Activated CD4-positive, alpha-beta memory T cell treated with anti-CD3 and anti-CD28 coated beads, Interleukin-2, amount 10 ng/mL, durations not matched to agents 7 days and 5 days (primary cell): ENCODE measurements at regions of chr2 and their contacts with region 1.

Region 1: GRCh38 chr2:26785431-26786206 is at the start of gene CENPA:
- DNase-seq: peak; percentile 97
- H3K4me3 Mint-ChIP-seq: peak within 1 kb of the TSS; percentile 95
- H3K27ac Mint-ChIP-seq: peak within 1 kb of the TSS; percentile 84
- H3K4me1 Mint-ChIP-seq: peaks cover 40% of the 10 kb centered on the region
- H3K27me3 Mint-ChIP-seq: no peaks in the 10 kb centered on the region
- total RNA-seq, gene CENPA: 39.5 to 43.1 TPM

Region 2: GRCh38 chr2:26764078-26764887 is 21.3 kb before region 1 on chr2 and contains the start of gene SLC35F6:
- CTCF ChIA-PET with region 1: no interaction called
- POLR2A ChIA-PET with region 1: interaction called, 84 read pairs
- DNase-seq: peak; percentile 86
- H3K4me3 Mint-ChIP-seq: peak within 1 kb of the TSS; percentile 86
- H3K27ac Mint-ChIP-seq: peak within 1 kb of the TSS; percentile 83
- H3K4me1 Mint-ChIP-seq: peaks cover 49% of the 10 kb centered on the region
- H3K27me3 Mint-ChIP-seq: peaks cover 3% of the 10 kb centered on the region
- total RNA-seq, gene SLC35F6: 27.0 to 27.6 TPM

Region 3: GRCh38 chr2:26770986-26771602 is 14.5 kb before region 1 on chr2:
- CTCF ChIA-PET with region 1: interaction called, 3 read pairs
- POLR2A ChIA-PET with region 1: interaction called, 84 read pairs
- DNase-seq: no peak
- H3K4me3 Mint-ChIP-seq: no peak overlapping the region
- H3K27ac Mint-ChIP-seq: peak overlapping the region; percentile 96
- H3K4me1 Mint-ChIP-seq: peaks cover 62% of the 10 kb centered on the region
- H3K27me3 Mint-ChIP-seq: no peaks in the 10 kb centered on the region